PC-3 (cell line): ENCODE measurements at regions of chr1 and their contacts with region 1.

Region 1: DNA sequence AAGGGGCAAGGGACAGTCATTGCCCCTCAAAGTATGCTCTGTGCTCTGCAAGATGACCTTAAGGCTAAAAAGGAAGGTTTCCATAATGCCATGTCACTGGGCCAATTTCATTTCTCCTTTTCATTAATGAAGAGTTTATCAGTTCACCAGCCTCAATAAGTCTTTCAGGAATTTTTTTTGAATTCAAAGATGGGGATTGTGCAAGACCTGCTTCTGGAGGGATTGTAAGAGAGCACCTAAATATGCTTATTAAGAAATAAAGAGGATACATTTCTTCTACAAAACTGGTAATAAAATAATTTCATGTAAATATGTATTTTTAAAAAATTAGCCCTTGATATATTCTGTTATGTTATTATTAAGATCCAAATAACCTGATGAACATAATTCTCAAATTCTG is 86.8 kb upstream of the RGS4 start:
- DNase-seq: no peak
- ATAC-seq: no peak
- H3K4me3 ChIP-seq: no peak overlapping the region
- H3K27ac ChIP-seq: no peak overlapping the region
- H3K4me1 ChIP-seq: peaks cover 17% of the 10 kb centered on the region
- H3K27me3 ChIP-seq: no peaks in the 10 kb centered on the region
- CTCF ChIP-seq: no peak

Region 2: GRCh38 chr1:162939039-162939438 is 43.3 kb before region 1 on chr1:
- CTCF ChIA-PET with region 1: no interaction called
- POLR2A ChIA-PET with region 1: interaction called, 10 read pairs
- intact Hi-C with region 1: no loop called
- DNase-seq: peak; percentile 65
- ATAC-seq: peak; percentile 79
- H3K4me3 ChIP-seq: no peak overlapping the region
- H3K27ac ChIP-seq: no peak overlapping the region
- H3K4me1 ChIP-seq: no peaks in the 10 kb centered on the region
- H3K27me3 ChIP-seq: no peaks in the 10 kb centered on the region
- CTCF ChIP-seq: peak; percentile 81

Region 3: GRCh38 chr1:163054181-163054591 is 71.8 kb after region 1 on chr1:
- CTCF ChIA-PET with region 1: no interaction called
- POLR2A ChIA-PET with region 1: no interaction called
- intact Hi-C with region 1: no loop called
- DNase-seq: no peak
- ATAC-seq: no peak
- H3K4me3 ChIP-seq: no peak overlapping the region
- H3K27ac ChIP-seq: no peak overlapping the region
- H3K4me1 ChIP-seq: peaks cover 9% of the 10 kb centered on the region
- H3K27me3 ChIP-seq: no peaks in the 10 kb centered on the region
- CTCF ChIP-seq: no peak

Region 4: GRCh38 chr1:163367721-163368120 is 385.4 kb after region 1 on chr1:
- CTCF ChIA-PET with region 1: no interaction called
- POLR2A ChIA-PET with region 1: no interaction called
- intact Hi-C with region 1: no loop called
- DNase-seq: no peak
- ATAC-seq: no peak
- H3K4me3 ChIP-seq: no peak overlapping the region
- H3K27ac ChIP-seq: no peak overlapping the region
- H3K4me1 ChIP-seq: no peaks in the 10 kb centered on the region
- H3K27me3 ChIP-seq: peaks cover 55% of the 10 kb centered on the region
- CTCF ChIP-seq: no peak